A549 (cell line): ENCODE measurements at regions of chr14 and their contacts with region 1.

Region 1: DNA sequence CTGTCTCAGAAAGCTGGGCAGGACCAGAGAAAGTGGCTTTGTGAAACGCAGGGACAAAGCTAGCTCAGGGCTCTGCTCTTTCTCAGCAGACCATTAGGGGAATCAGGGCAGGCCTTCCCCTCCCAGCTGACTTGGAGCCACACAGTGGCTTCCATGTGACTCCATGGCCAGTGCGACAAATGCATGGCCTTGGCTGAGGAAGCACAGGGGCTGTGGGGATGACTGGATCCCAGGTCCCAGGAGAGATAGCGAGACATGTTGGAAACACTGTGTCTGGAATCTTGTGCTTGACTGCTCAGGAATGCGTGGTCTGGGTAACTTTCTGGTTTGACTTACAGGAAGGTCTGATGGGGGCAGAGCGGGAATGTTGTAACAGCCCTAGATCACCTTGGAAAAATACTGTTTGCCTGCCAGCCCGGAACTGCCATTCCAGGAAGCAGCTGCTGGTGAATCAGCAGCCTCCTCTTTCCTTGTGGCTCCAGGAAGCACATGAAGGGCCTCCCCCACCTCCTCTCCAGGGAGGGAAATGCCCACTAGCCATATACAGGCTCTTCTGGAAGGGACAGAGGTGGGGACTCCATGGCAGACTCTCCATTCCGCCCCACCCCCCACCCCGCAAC is 133.5 kb upstream of the HIF1A start:
- DNase-seq: peak; percentile 77 to 95
- ATAC-seq: peak; percentile 65 to 67
- H3K4me3 ChIP-seq: no peak overlapping the region
- H3K27ac ChIP-seq: peak overlapping the region; percentile 96 to 99
- H3K4me1 ChIP-seq: peaks cover 92% of the 10 kb centered on the region
- CTCF ChIP-seq: no peak
- EP300 ChIP-seq: peak; percentile 87 to 95; a peak in 4 of 5 replicates
- POLR2A ChIP-seq: no peak; the same call in 1 of the 2 replicates
- RAD21 ChIP-seq: peak; percentile 34 to 65

Region 2: GRCh38 chr14:61280526-61281185 is 281.1 kb before region 1 on chr14:
- CTCF ChIA-PET with region 1: no interaction called
- POLR2A ChIA-PET with region 1: no interaction called
- DNase-seq: peak; percentile 68 to 84
- ATAC-seq: peak; percentile 91 to 95
- H3K4me3 ChIP-seq: peak overlapping the region; percentile 53
- H3K27ac ChIP-seq: peak overlapping the region; percentile 75 to 86
- H3K4me1 ChIP-seq: peaks cover 11% of the 10 kb centered on the region
- CTCF ChIP-seq: peak; percentile 71
- EP300 ChIP-seq: no peak
- POLR2A ChIP-seq: peak; percentile 55
- RAD21 ChIP-seq: peak in 1 of 2 experiments; percentile 35; a peak in 3 of 5 replicates

Region 3: DNA sequence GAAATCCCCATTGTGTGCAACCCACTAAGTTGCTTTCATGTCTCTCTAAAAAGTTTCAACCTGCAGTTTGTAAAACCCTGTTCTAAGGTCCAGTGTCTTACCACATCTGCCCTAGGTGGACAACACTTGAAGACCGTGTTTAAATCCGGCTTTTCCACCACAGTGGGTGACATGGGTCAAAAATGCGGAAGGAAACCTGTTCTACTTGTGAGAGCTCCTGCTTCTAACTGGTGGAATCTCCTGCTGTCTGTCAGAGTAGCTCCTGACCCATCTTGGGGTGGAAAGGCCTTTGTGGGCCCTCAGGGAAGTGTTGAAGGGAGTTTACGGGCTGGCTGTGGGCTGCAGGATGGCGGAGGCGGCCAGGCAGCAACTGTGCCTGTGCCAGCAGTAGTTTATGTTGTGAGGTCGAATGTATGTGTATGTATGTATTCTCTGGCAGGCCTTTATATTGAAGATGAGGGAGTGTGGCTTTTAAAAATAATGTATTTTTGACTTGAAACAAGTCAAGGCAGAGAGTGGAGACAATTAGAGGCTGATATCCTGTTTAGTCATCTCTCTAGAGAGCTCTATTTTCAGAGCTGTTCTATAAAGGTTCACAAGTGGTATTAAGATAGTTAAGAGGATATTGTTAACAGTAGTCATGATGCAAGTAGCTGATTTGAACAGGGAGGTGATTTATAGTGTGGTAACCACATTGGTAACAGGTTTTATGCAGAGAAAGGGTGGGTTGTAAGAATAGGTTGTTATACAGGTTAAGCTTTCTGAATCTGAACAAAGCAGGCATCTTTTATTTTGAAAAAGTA is 173.4 kb before region 1 on chr14:
- CTCF ChIA-PET with region 1: no interaction called
- POLR2A ChIA-PET with region 1: no interaction called
- DNase-seq: no peak
- ATAC-seq: peak in 1 of 2 experiments; percentile 43; a peak in 3 of 6 replicates
- H3K4me3 ChIP-seq: no peak overlapping the region
- H3K27ac ChIP-seq: 0 out of 6 replicates have a peak overlapping the region, but pooled peaks of 1 of the 2 experiments have one; percentile 4
- H3K4me1 ChIP-seq: peaks cover 8% of the 10 kb centered on the region; the same call in 2 of the 3 replicates
- CTCF ChIP-seq: no peak
- EP300 ChIP-seq: no peak
- POLR2A ChIP-seq: no peak
- RAD21 ChIP-seq: no peak

Region 4: DNA sequence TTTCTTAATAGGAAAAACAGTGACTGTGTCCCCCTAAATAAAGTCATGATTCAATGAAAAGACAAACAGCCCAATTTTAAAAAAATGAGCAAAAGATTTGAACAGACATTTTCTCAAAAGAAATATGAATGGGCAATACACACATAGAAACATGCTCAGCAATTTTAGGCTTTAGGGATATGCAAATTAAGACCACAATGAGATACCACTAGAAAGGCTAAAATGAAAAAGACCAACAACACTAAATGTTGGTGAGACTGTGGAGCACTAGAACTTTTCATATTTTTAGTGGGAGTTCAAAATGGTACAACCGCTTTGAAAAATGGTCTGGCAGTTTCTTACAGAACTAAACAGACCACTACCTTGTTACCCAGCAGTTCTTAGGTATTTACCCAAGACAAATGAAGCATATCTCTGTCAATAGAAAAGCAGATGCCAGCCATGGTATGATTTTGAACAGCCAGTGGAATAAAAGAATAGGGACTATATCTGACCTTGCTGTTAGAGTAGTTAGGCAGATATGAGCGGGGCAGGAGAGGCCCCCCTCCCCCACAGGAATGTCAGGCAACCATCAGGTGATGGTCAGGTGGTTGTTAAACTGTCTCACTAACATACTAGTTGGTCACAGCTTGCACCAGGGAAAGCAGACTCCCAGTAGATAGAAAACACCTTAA is 131.6 kb before region 1 on chr14:
- CTCF ChIA-PET with region 1: no interaction called
- POLR2A ChIA-PET with region 1: no interaction called
- DNase-seq: no peak
- ATAC-seq: no peak
- H3K4me3 ChIP-seq: no peak overlapping the region
- H3K27ac ChIP-seq: 0 out of 6 replicates have a peak overlapping the region, but pooled peaks of 1 of the 2 experiments have one; percentile 7
- H3K4me1 ChIP-seq: peaks cover 36% of the 10 kb centered on the region
- CTCF ChIP-seq: no peak
- EP300 ChIP-seq: no peak
- POLR2A ChIP-seq: no peak
- RAD21 ChIP-seq: no peak

Region 5: DNA sequence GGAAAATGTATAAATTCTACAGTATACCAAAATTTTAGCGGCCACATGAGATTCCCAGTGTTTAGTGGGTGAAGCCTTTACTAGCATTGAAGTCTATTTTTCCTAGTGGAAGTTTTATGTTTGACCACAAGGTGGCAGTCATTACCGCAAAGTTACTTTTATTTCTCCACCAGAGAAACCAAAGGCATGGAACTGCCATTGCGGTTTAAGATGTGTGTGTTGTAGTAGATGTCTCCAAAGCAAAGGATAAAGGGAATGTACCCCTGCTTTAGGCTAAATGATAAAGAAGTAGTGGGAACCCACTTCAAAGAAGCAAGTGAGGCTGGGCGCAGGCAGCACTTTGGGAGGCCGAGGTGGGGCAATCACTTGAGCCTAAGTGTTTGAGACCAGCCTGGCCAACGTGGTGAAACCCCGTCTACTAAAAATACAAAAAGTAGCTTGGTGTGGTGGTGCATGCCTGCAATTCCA is 99.9 kb before region 1 on chr14:
- CTCF ChIA-PET with region 1: interaction called, 10 read pairs
- POLR2A ChIA-PET with region 1: no interaction called
- DNase-seq: peak; percentile 72 to 73
- ATAC-seq: peak; percentile 74
- H3K4me3 ChIP-seq: no peak overlapping the region
- H3K27ac ChIP-seq: peak overlapping the region; percentile 86 to 89
- H3K4me1 ChIP-seq: peaks cover 45% of the 10 kb centered on the region
- CTCF ChIP-seq: peak; percentile 90
- EP300 ChIP-seq: no peak
- POLR2A ChIP-seq: no peak
- RAD21 ChIP-seq: peak; percentile 93 to 95

Region 6: DNA sequence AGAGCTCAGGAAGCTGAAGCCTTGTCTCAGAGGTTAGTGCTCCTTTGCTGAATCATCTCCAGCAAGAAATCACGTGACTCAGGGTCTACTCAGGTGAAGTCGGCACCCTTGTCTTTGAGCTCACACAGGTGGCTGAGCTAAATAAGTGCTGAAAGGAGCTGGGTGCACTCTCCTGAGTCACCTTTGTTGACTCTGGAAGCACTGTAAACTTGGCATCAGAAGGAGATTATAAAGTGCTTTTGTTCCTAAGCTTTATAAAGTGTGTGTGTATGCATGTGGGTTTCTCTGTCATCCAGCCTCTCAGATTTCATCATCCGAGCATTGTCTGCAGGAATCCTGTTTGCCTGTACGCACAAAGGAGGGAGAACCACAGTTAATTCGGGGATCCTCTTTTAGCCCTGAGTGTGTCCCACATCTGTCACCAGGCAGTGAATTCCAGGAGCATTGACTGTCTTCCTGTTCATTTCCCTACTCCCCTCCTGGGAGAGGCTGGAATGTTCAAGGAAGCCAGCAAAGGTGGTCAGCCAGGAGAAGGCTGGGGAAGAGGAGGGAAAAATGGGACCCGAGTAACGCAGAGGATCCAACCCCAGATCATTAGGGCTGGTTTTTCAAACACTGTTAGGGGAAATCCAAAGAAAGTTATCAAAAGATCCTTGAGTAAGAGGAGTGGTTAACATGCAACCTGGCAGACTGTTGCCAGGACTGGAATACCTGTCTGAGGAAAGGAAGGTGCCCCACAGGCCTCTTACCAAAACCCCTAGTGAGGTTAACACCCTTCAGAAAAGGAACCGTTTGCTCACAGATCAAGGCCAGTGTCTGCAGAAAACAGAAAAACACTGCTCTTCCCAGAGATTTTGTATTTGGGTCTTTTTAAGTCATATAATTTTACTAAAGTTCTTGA is 24.0 kb before region 1 on chr14:
- CTCF ChIA-PET with region 1: interaction called, 3 read pairs
- POLR2A ChIA-PET with region 1: interaction called, 12 read pairs
- DNase-seq: peak; percentile 83 to 93
- ATAC-seq: peak; percentile 85
- H3K4me3 ChIP-seq: no peak overlapping the region
- H3K27ac ChIP-seq: peak overlapping the region; percentile 96 to 99
- H3K4me1 ChIP-seq: peaks cover 68% of the 10 kb centered on the region
- CTCF ChIP-seq: no peak
- EP300 ChIP-seq: peak; percentile 88 to 93; a peak in 4 of 5 replicates
- POLR2A ChIP-seq: no peak
- RAD21 ChIP-seq: peak in 1 of 2 experiments; percentile 53; a peak in 2 of 5 replicates

Region 7: DNA sequence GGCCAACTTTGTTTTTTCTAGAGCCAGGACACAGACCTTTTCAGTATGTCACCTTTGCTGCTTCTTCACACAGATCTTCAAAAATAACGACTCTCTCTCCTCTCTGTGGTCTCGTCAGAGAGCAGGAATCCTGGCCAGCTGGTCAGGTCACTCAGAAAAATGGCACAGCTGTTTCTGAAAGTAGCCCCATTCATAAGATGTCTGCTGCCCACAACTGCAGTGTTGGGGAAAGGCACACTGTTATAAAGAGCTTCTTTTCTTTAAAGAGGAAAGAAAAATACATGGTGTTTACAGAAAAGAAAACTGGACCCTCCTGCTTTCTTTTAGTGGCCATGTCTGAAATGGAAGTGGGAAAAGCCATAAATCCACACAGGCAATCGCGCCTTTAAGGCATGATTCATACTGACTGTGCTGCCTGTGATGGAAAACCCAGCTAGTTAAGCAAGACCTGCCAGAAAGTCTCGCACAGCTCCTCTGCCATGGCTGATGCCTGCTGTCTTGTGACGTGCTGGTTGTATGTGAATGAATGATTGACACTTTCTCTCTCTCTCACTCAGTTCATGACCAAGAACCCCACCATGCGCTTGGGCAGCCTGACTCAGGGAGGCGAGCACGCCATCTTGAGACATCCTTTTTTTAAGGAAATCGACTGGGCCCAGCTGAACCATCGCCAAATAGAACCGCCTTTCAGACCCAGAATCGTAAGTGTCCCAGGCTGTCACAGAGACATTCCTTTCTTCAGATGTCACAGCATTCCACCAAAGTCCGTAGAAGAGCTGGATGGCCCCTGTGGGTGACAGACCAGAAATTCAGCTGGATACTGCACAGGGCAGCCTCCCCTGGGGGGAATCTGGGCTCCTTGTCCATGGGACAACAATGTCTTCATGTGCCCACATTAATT is 14.3 kb before region 1 on chr14:
- CTCF ChIA-PET with region 1: interaction called, 21 read pairs
- POLR2A ChIA-PET with region 1: interaction called, 7 read pairs
- DNase-seq: peak; percentile 62 to 74
- ATAC-seq: peak; percentile 81 to 85
- H3K4me3 ChIP-seq: no peak overlapping the region
- H3K27ac ChIP-seq: peak overlapping the region; percentile 96 to 99
- H3K4me1 ChIP-seq: peaks cover 69% of the 10 kb centered on the region
- CTCF ChIP-seq: no peak
- EP300 ChIP-seq: peak in 1 of 2 experiments; percentile 36; a peak in 1 of 5 replicates
- POLR2A ChIP-seq: no peak
- RAD21 ChIP-seq: no peak

Region 8: DNA sequence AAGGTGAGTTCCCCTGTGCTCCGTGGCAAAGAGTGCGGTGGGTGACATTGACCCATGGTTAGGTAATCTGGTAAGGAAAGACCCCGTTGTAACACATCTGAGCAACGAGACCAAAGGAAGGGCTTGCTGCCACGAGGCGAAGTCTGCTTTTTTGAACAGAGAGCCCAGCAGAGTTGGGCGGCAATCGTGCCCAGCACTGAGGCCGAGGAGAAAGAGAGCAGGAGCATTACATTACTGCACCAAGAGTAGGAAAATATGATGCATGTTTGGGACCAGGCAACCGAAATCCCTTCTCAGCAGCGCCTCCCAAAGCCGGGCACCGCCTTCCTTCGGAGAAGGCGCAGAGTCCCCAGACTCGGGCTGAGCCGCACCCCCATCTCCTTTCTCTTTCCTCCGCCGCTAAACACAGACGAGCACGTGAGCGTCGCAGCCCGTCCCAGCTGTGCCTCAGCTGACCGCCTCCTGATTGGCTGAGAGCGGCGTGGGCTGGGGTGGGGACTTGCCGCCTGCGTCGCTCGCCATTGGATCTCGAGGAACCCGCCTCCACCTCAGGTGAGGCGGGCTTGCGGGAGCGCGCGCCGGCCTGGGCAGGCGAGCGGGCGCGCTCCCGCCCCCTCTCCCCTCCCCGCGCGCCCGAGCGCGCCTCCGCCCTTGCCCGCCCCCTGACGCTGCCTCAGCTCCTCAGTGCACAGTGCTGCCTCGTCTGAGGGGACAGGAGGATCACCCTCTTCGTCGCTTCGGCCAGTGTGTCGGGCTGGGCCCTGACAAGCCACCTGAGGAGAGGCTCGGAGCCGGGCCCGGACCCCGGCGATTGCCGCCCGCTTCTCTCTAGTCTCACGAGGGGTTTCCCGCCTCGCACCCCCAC is 133.3 kb after region 1 on chr14 and contains the start of gene HIF1A:
- CTCF ChIA-PET with region 1: interaction called, 13 read pairs
- POLR2A ChIA-PET with region 1: interaction called, 107 read pairs
- DNase-seq: peak; percentile 93 to 98
- ATAC-seq: peak; percentile 90 to 93
- H3K4me3 ChIP-seq: peak within 1 kb of the TSS; percentile 88
- H3K27ac ChIP-seq: peak within 1 kb of the TSS; percentile 98
- H3K4me1 ChIP-seq: peaks cover 9% of the 10 kb centered on the region; the same call in 2 of the 3 replicates
- CTCF ChIP-seq: peak; percentile 29; the same call in 2 of the 3 replicates
- EP300 ChIP-seq: no peak
- POLR2A ChIP-seq: peak; percentile 95
- RAD21 ChIP-seq: peak; percentile 39 to 60; a peak in 4 of 5 replicates
- polyA plus RNA-seq, gene HIF1A: 284 and 383 TPM in 2 replicates

Region 9: DNA sequence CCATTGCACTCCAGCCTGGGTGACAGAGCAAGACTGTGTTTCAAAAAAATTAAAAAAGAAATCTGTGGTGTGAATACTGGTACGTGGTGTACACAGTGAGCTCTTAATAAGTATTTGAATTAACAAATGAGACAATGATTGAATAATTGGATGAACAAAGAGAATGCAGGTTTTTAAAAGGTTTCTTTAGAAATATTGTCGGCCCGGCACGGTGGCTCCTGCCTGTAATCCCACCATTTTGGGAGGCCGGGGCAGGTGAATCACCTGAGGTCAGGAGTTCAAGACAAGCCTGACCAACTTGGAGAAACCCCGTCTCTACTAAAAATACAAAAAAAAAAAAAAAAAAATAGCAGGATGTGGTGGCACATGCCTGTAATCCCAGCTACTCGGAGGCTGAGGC is 140.2 kb after region 1 on chr14:
- CTCF ChIA-PET with region 1: interaction called, 13 read pairs
- POLR2A ChIA-PET with region 1: interaction called, 11 read pairs
- DNase-seq: no peak
- ATAC-seq: no peak
- H3K4me3 ChIP-seq: peak overlapping the region; percentile 88; the same call in 2 of the 3 replicates
- H3K27ac ChIP-seq: peak overlapping the region in 1 of 2 experiments; percentile 71; a peak in 4 of 6 replicates
- H3K4me1 ChIP-seq: peaks cover 62% of the 10 kb centered on the region
- CTCF ChIP-seq: no peak
- EP300 ChIP-seq: no peak
- POLR2A ChIP-seq: no peak
- RAD21 ChIP-seq: no peak

Region 10: DNA sequence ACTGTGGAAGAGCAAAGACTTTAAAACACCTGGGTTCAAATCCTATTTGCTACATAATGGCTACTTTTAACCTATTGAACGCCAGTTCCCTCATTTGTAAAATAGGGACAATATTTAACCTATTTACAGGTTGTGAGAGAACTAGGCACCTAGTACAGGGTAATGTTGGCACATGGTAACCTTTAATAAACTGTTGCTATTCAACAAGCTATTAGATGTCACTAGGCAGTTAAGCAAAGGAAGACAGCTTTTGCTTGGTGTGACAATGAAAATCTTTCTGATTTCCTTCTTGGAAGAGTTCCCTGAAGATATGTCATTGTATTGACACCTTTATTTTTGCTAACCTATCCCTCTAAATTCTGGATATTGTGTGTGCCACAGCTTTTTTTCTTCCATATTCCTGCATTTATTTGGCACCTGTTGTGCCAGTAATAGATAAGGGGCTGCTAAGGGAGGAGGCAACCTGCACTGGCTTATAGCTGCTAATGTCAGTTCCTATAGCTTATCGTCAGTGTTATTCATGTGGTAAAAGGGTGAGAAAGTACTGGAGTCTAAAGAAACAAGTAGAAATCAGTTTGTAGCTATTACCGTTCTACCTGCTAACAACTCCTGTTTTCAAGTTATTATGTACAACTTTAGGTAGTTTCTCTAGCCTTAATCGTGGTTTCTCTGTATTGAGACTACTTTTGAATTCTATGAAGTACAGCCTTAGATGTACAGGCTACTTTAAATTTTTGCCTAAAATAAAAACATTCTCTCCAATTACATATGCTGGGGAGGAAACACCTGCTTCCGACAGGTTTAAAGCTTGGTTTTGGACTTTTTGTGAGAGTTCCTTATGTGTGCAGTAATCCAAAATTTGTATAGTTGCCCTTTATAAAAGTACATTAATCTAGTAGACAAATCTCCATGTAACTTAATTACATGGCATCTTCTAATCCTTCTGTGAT is 157.9 kb after region 1 on chr14:
- CTCF ChIA-PET with region 1: interaction called, 12 read pairs
- POLR2A ChIA-PET with region 1: interaction called, 5 read pairs
- DNase-seq: no peak
- ATAC-seq: peak; percentile 12 to 44; a peak in 3 of 6 replicates
- H3K4me3 ChIP-seq: no peak overlapping the region
- H3K27ac ChIP-seq: peak overlapping the region in 1 of 2 experiments; percentile 19; a peak in 2 of 6 replicates
- H3K4me1 ChIP-seq: peaks cover 99% of the 10 kb centered on the region
- CTCF ChIP-seq: no peak
- EP300 ChIP-seq: no peak
- POLR2A ChIP-seq: no peak
- RAD21 ChIP-seq: no peak